ENCODE measurements at regions of chr11 and their contacts with region 1.

Region 1: DNA sequence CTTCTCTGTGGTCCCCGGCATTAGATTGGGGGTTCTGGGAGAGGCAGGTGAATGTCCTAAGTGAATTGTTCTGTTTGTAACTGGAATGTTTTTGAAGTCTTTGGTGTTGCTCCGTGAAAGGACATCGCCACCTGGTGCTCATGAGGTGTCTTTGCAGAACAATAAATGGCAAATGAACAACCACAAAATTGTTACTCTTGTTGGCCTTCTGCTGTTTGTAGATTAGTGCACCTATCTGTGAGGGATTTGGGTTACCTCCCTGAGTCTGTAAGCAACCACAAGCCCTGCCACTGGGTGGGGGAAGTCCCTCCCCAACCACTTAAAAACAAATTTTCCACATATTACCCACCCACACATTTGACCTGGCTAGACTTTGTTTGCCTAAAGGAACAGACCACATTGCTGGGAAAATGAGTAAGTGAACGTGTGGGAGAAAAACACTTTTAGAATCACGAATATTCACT is 4.7 kb downstream of the MPEG1 start:
- DNase-seq: peak; percentile 69
- ATAC-seq: peak; percentile 56
- H3K4me3 ChIP-seq: no peak overlapping the region
- H3K27ac ChIP-seq: no peak overlapping the region
- H3K4me1 ChIP-seq: 0 out of 2 replicates have a peak, but pooled peaks cover 4% of the 10 kb centered on the region
- H3K27me3 ChIP-seq: peaks cover 6% of the 10 kb centered on the region; the same call in 1 of the 2 replicates
- CTCF ChIP-seq: peak; percentile 88

Region 2: GRCh38 chr11:59283825-59284772 is 76.1 kb after region 1 on chr11:
- CTCF ChIA-PET with region 1: no interaction called
- POLR2A ChIA-PET with region 1: no interaction called
- intact Hi-C with region 1: loop called (anchors 2 kb)
- DNase-seq: peak; percentile 71
- ATAC-seq: peak; percentile 45; the same call in 1 of the 2 replicates
- H3K4me3 ChIP-seq: no peak overlapping the region
- H3K27ac ChIP-seq: no peak overlapping the region
- H3K4me1 ChIP-seq: no peaks in the 10 kb centered on the region
- H3K27me3 ChIP-seq: peaks cover 42% of the 10 kb centered on the region
- CTCF ChIP-seq: peak; percentile 91

Measured in PC-3 (cell line).